Activated T-helper 2 cell treated with anti-CD3 and anti-CD28 coated beads, Interferon-gamma antibody, Interleukin-2, Interleukin-4, amounts not matched to agents 10 μg/mL and 5 μg/mL and 100 μg/mL, durations not matched to agents 14 hours and 24 hours and 36 hours (primary cell): ENCODE measurements at regions of chr20 and their contacts with region 1.

Region 1: GRCh38 chr20:31717478-31718201 is 5.0 kb downstream of the BCL2L1 start:
- DNase-seq: peak; percentile 22
- H3K4me3 Mint-ChIP-seq: peak overlapping the region; percentile 97
- H3K27ac Mint-ChIP-seq: peak overlapping the region; percentile 93
- H3K4me1 Mint-ChIP-seq: peaks cover 54% of the 10 kb centered on the region
- H3K27me3 Mint-ChIP-seq: no peaks in the 10 kb centered on the region

Region 2: DNA sequence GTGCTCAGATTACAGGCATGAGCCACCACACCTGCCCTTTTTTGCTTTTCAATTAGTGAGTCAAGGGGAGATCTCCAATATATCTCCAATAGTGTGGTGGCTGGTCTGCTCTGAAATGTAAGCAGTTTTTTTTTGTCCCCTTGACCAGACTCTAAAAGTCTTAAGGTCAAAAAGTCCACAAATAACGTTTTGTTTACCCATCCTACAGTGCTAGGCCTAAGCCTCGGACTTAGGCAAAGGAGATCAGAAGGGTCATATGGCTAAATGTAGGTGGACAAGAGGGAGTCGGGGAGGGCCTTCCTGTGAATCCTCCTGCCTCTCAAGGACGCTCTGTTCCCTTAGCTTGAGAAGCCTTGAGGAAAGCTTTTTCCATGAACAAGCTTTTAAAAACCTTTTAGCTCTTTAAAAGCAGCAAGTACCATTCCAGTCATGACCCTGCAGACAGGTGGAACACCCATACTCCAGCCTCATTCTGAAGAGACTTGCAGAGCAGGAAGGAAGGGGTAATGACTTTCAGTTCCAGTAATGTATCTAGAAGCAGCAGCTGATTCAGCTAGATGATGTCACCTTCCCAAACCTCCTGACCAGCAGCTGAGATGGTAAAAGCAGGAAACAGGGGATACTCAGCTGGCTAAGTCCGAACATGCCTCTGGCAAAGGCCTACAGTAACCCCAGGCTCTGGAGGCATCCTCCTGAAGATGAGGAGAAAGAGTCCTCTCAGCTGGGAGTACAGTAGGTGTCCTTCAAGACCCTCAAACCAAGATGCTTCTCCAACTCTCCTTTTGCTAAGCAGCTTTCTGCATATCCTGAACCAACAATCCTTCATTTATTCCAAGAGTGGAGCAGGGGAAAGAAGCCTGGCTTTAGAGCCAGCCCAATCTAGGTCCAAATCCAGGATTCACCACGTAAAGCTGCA is 18.6 kb before region 1 on chr20:
- intact Hi-C with region 1: loop called (anchors 1 kb)
- DNase-seq: no peak
- H3K4me3 Mint-ChIP-seq: peak overlapping the region; percentile 1
- H3K27ac Mint-ChIP-seq: peak overlapping the region; percentile 81
- H3K4me1 Mint-ChIP-seq: peaks cover 60% of the 10 kb centered on the region
- H3K27me3 Mint-ChIP-seq: no peaks in the 10 kb centered on the region

Region 3: DNA sequence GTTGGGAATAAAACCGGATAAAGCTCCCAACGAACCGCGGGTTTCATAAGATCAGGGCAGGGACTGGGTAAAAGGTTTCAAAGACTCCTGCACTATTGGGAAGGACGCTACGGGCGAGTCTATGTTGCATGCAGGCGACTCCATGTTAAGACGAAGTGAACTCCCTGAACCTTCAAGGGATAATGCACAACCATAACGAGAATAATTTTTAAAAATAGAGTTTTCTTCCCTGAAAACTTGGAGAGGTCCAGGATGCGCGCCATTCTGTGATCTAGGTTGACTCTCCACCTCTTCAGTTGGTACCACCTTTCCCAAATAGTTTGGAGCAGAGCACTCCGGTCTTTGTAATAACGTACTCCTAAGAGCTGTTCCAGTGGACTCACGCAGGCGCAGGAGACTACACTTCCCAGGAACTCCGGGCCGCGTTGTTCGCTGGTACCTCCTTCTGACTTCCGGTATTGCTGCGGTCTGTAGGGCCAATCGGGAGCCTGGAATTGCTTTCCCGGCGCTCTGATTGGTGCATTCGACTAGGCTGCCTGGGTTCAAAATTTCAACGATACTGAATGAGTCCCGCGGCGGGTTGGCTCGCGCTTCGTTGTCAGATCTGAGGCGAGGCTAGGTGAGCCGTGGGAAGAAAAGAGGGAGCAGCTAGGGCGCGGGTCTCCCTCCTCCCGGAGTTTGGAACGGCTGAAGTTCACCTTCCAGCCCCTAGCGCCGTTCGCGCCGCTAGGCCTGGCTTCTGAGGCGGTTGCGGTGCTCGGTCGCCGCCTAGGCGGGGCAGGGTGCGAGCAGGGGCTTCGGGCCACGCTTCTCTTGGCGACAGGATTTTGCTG is 21.3 kb after region 1 on chr20 and contains the start of gene TPX2:
- intact Hi-C with region 1: loop called (anchors 1 kb)
- DNase-seq: peak; percentile 81
- H3K4me3 Mint-ChIP-seq: no peak within 1 kb of the TSS
- H3K27ac Mint-ChIP-seq: no peak within 1 kb of the TSS
- H3K4me1 Mint-ChIP-seq: peaks cover 4% of the 10 kb centered on the region
- H3K27me3 Mint-ChIP-seq: no peaks in the 10 kb centered on the region
- total RNA-seq, gene TPX2: 82.8 and 83.0 TPM in 2 replicates